Astrocyte of the cerebellum (primary cell): ENCODE measurements at regions of chr19 and their contacts with region 1.

Region 1: DNA sequence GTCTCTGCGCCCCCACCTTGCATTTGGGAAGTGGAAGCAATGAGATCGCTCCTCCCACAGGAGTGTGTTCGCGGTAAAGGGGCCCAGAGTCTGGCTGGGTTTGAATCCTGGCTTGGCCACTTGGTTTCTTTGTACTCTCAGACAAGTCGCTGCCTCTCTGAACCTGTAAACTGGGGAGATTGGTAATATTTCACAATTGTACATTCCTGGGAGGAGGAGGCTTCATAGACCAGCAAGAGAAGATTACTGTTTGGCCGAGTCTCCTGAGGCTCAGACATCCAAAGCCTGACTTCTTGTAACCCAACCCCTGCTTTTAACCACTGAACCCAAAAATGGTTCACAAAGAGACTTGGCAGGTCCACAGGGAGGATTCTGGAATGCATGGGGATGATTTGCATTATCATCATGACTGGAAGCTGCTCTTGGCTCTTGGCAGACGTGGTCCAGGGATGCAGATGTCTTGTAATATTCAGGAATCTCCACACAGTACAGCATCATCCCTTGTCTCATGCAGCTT is 13.6 kb upstream of the STRN4 start:
- DNase-seq: peak; percentile 49
- H3K4me3 ChIP-seq: no peak overlapping the region
- CTCF ChIP-seq: no peak

Region 2: DNA sequence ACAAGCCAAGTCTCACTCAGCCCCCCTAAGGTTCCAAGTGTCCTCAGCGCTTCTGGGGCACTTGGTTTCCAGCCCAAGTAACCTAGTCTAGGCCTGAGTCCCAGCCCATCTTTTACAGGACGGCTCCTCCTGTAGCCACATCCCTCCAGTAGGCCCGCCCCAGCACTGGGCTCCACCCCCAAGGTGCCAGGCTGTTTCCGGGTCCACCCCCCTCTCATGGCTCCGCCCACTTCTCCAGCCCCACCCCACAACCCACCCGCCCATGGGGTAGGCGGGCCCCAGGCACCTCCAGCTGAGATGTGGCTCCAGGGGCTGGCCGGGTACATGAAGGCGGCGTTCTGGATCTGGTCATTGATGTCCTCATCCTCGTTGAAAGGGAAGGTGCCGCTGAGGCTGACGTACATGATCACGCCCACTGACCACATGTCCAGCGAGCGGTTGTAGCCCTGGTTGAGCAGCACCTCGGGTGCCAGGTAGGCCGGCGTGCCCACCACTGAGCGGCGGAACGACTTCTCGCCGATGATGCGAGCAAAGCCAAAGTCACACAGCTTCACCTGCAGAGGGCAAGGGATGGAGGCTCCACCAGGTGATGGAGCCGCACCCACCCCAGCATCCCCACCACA is 81.7 kb before region 1 on chr19:
- in situ Hi-C with region 1: no loop called
- DNase-seq: no peak
- H3K4me3 ChIP-seq: no peak overlapping the region
- CTCF ChIP-seq: no peak

Region 3: GRCh38 chr19:46809536-46810272 is 49.8 kb after region 1 on chr19:
- in situ Hi-C with region 1: loop called (anchors 5 kb)
- DNase-seq: no peak
- H3K4me3 ChIP-seq: no peak overlapping the region
- CTCF ChIP-seq: no peak